Endothelial cell of umbilical vein (primary cell): ENCODE measurements at regions of chr5 and their contacts with region 1.

Region 1: DNA sequence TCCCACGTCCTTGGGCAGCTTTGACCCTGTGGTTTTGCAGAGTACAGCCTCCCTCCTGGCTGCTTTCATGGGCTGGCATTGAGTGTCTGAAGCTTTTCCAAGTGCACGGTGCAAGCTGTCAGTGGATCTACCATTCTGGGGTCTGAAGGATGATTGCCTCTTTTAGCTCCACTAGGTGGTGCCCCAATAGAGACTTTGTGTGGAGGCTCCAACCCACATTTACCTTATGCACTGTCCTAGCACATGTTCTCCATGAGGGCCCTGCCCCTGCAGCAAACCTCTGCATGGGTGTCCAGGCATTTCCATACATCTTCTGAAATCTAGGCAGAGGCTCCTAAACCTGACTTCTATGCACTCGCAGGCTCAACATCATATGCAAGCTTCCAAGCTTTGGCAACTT is 644.2 kb upstream of the CDH9 start:
- DNase-seq: no peak
- H3K4me3 ChIP-seq: no peak overlapping the region
- H3K27ac ChIP-seq: no peak overlapping the region
- H3K4me1 ChIP-seq: no peaks in the 10 kb centered on the region
- H3K27me3 ChIP-seq: no peaks in the 10 kb centered on the region
- CTCF ChIP-seq: no peak
- POLR2A ChIP-seq: no peak

Region 2: DNA sequence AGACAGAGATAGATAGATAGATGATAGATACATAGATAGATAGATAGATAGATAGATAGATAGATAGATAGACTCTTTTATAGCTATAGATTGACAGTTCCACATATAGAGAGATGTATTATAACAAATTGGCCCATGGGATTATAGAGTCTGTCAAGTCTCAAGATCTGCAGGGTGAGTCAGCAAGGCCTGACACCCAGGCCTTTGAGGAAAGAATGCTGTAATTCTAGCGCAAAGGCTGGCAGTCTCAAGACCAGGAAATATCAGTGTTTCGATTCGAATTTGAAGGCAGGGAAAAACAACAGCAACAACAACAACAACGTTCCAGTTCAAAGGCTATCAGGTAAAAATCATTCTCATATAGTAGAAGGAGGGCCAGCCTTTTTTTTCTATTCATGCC is 305.0 kb before region 1 on chr5:
- CTCF ChIA-PET with region 1: no interaction called
- POLR2A ChIA-PET with region 1: no interaction called
- dilution Hi-C with region 1: no loop called
- intact Hi-C with region 1: no loop called
- DNase-seq: no peak
- H3K4me3 ChIP-seq: no peak overlapping the region
- H3K27ac ChIP-seq: no peak overlapping the region
- H3K4me1 ChIP-seq: no peaks in the 10 kb centered on the region
- H3K27me3 ChIP-seq: no peaks in the 10 kb centered on the region
- CTCF ChIP-seq: no peak
- POLR2A ChIP-seq: no peak

Region 3: GRCh38 chr5:27465140-27465539 is 217.5 kb before region 1 on chr5:
- CTCF ChIA-PET with region 1: no interaction called
- POLR2A ChIA-PET with region 1: no interaction called
- dilution Hi-C with region 1: no loop called
- intact Hi-C with region 1: no loop called
- DNase-seq: no peak
- H3K4me3 ChIP-seq: no peak overlapping the region
- H3K27ac ChIP-seq: no peak overlapping the region
- H3K4me1 ChIP-seq: no peaks in the 10 kb centered on the region
- H3K27me3 ChIP-seq: no peaks in the 10 kb centered on the region
- CTCF ChIP-seq: no peak
- POLR2A ChIP-seq: no peak

Region 4: GRCh38 chr5:27612161-27612560 is 70.4 kb before region 1 on chr5:
- CTCF ChIA-PET with region 1: no interaction called
- POLR2A ChIA-PET with region 1: no interaction called
- dilution Hi-C with region 1: no loop called
- intact Hi-C with region 1: no loop called
- DNase-seq: no peak
- H3K4me3 ChIP-seq: no peak overlapping the region
- H3K27ac ChIP-seq: no peak overlapping the region
- H3K4me1 ChIP-seq: no peaks in the 10 kb centered on the region
- H3K27me3 ChIP-seq: no peaks in the 10 kb centered on the region
- CTCF ChIP-seq: no peak
- POLR2A ChIP-seq: no peak

Region 5: DNA sequence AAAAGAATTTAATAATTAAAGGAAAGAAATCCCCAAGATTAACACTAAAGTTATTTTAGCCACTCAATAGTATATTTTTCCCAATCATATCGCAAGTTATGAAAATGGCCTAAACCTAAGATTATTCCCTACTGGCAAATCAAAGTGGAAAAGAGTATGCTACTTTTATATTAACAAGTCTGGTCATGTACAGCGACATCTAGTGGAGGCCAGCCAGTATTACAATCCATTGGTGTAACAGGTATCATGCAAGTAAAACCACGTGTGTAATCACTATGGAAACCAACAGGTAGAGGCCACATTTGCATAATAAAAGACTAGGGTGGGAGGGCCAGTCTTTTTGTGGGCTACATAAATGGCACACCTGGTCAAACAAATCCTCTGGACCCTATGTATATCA is 332.2 kb after region 1 on chr5:
- CTCF ChIA-PET with region 1: interaction called, 3 read pairs
- POLR2A ChIA-PET with region 1: no interaction called
- dilution Hi-C with region 1: no loop called
- intact Hi-C with region 1: loop called (anchors 10 kb)
- DNase-seq: no peak
- H3K4me3 ChIP-seq: no peak overlapping the region
- H3K27ac ChIP-seq: no peak overlapping the region
- H3K4me1 ChIP-seq: no peaks in the 10 kb centered on the region
- H3K27me3 ChIP-seq: no peaks in the 10 kb centered on the region
- CTCF ChIP-seq: no peak
- POLR2A ChIP-seq: no peak